ENCODE measurements at regions of chr21 and their contacts with region 1.

Region 1: DNA sequence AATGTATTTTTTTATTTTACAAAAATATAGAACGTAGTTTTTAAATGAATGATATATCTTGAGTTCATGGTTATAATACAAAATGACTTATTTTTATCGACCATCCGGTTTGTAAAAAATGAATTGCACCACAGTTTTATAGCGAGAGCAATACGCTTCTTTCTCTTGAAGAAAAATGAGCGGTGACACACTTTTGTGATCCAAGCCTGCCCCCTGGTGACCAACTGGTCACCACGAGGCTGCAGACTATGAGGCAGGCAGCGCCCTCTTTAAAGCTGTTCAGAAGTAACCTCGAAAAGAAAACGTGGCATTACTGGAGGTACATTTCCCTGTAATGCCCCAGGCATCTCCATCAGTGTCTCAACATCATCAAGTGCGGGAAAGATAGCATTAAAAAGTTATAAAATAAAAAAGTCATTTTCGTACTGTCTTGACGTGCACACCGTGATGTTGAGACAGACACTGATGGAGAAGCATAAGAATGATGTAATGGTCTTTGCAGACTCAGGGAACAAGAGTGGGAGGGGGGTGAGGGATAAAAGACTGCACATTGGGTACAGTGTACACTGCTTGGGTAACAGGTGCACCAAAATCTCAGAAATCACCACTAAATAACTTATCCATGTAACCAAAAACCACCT is 734.2 kb upstream of the ADAMTS5 start:
- DNase-seq: peak; percentile 79
- H3K4me3 ChIP-seq: no peak overlapping the region
- H3K27ac ChIP-seq: no peak overlapping the region
- H3K4me1 ChIP-seq: no peaks in the 10 kb centered on the region
- H3K27me3 ChIP-seq: no peaks in the 10 kb centered on the region
- CTCF ChIP-seq: peak; percentile 72 to 91 (median 86)
- POLR2A ChIP-seq: no peak

Region 2: DNA sequence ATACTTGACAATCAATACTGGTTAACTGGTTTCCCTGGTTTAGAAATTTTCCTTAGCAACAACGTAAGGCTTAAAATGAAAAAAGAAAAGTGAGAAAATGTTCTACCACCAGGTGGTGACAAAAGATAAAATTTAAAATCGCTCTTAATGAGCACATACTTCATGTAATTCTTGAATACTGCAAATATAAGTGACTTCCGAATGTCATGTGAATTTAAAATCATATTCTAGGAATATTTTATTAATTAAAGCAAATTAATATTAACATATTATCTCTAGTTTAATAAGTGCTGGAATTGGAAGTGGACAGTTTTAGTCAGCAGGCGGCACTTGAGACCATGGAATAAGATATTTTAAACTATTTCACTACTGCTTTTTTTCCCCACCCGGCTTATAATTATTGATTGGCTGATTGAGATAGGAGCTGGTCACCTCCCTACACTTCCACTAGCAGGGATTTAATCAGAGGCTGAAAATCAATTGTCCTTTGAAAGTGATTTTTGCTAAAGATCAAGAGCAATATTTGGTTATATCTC is 850.9 kb before region 1 on chr21:
- intact Hi-C with region 1: loop called (anchors 1 kb)
- DNase-seq: no peak
- H3K4me3 ChIP-seq: no peak overlapping the region
- H3K27ac ChIP-seq: no peak overlapping the region
- H3K4me1 ChIP-seq: no peaks in the 10 kb centered on the region
- H3K27me3 ChIP-seq: no peaks in the 10 kb centered on the region
- CTCF ChIP-seq: peak; percentile 65 to 87 (median 79)
- POLR2A ChIP-seq: no peak

Region 3: GRCh38 chr21:26967062-26967913 is 733.8 kb before region 1 on chr21 and contains the start of gene ADAMTS5:
- intact Hi-C with region 1: loop called (anchors 5 kb)
- DNase-seq: peak; percentile 5
- H3K4me3 ChIP-seq: peak within 1 kb of the TSS; percentile 33 to 40
- H3K27ac ChIP-seq: peak within 1 kb of the TSS; percentile 42 to 66
- H3K4me1 ChIP-seq: no peaks in the 10 kb centered on the region
- H3K27me3 ChIP-seq: peaks cover 6% of the 10 kb centered on the region
- CTCF ChIP-seq: no peak
- POLR2A ChIP-seq: no peak
- total RNA-seq, gene ADAMTS5: 3.0 TPM

Region 4: GRCh38 chr21:27802816-27803475 is 101.9 kb after region 1 on chr21:
- intact Hi-C with region 1: loop called (anchors 5 kb)
- DNase-seq: peak; percentile 12
- H3K4me3 ChIP-seq: no peak overlapping the region
- H3K27ac ChIP-seq: no peak overlapping the region
- H3K4me1 ChIP-seq: no peaks in the 10 kb centered on the region
- H3K27me3 ChIP-seq: no peaks in the 10 kb centered on the region
- CTCF ChIP-seq: peak in 3 of 4 experiments; percentile 31 to 49 (median 47)
- POLR2A ChIP-seq: no peak

Region 5: GRCh38 chr21:28336314-28336713 is 635.2 kb after region 1 on chr21:
- intact Hi-C with region 1: loop called (anchors 5 kb)
- DNase-seq: peak; percentile 10
- H3K4me3 ChIP-seq: no peak overlapping the region
- H3K27ac ChIP-seq: no peak overlapping the region
- H3K4me1 ChIP-seq: no peaks in the 10 kb centered on the region
- H3K27me3 ChIP-seq: no peaks in the 10 kb centered on the region
- CTCF ChIP-seq: peak in 2 of 4 experiments; percentile 55 to 58
- POLR2A ChIP-seq: no peak

Region 6: GRCh38 chr21:28357743-28358142 is 656.6 kb after region 1 on chr21:
- intact Hi-C with region 1: no loop called
- DNase-seq: no peak
- H3K4me3 ChIP-seq: no peak overlapping the region
- H3K27ac ChIP-seq: no peak overlapping the region
- H3K4me1 ChIP-seq: no peaks in the 10 kb centered on the region
- H3K27me3 ChIP-seq: no peaks in the 10 kb centered on the region
- CTCF ChIP-seq: no peak
- POLR2A ChIP-seq: no peak

Region 7: GRCh38 chr21:28745131-28746016 is 1044.3 kb after region 1 on chr21:
- intact Hi-C with region 1: loop called (anchors 10 kb)
- DNase-seq: peak; percentile 66
- H3K4me3 ChIP-seq: peak overlapping the region; percentile 10 to 23
- H3K27ac ChIP-seq: peak overlapping the region; percentile 19 to 55
- H3K4me1 ChIP-seq: no peaks in the 10 kb centered on the region
- H3K27me3 ChIP-seq: no peaks in the 10 kb centered on the region
- CTCF ChIP-seq: peak; percentile 88 to 99 (median 94)
- POLR2A ChIP-seq: no peak

Region 8: GRCh38 chr21:28793043-28793442 is 1091.9 kb after region 1 on chr21:
- intact Hi-C with region 1: loop called (anchors 5 kb)
- DNase-seq: no peak
- H3K4me3 ChIP-seq: no peak overlapping the region
- H3K27ac ChIP-seq: no peak overlapping the region
- H3K4me1 ChIP-seq: no peaks in the 10 kb centered on the region
- H3K27me3 ChIP-seq: no peaks in the 10 kb centered on the region
- CTCF ChIP-seq: peak in 2 of 4 experiments; percentile 31
- POLR2A ChIP-seq: no peak

Measured in prostate gland (tissue), 2 donors.